Activated T-helper 1 cell treated with anti-CD3 and anti-CD28 coated beads, Interleukin-12 subunit alpha, Interleukin-12 subunit beta, Interleukin-2, Interleukin-4 antibody, amounts not matched to agents 30 ng/mL and 10 ng/mL and 1 ng/mL, durations not matched to agents 14 hours and 24 hours and 36 hours (primary cell): ENCODE measurements at regions of chr3 and their contacts with region 1.

Region 1: GRCh38 chr3:184298759-184299496 is at the start of gene PSMD2:
- DNase-seq: peak; percentile 95
- H3K4me3 Mint-ChIP-seq: peak within 1 kb of the TSS; percentile 92
- H3K27ac Mint-ChIP-seq: peak within 1 kb of the TSS; percentile 85
- H3K4me1 Mint-ChIP-seq: peaks cover 23% of the 10 kb centered on the region
- H3K27me3 Mint-ChIP-seq: peaks cover 4% of the 10 kb centered on the region
- total RNA-seq, gene PSMD2: 251 and 255 TPM in 2 replicates

Region 2: DNA sequence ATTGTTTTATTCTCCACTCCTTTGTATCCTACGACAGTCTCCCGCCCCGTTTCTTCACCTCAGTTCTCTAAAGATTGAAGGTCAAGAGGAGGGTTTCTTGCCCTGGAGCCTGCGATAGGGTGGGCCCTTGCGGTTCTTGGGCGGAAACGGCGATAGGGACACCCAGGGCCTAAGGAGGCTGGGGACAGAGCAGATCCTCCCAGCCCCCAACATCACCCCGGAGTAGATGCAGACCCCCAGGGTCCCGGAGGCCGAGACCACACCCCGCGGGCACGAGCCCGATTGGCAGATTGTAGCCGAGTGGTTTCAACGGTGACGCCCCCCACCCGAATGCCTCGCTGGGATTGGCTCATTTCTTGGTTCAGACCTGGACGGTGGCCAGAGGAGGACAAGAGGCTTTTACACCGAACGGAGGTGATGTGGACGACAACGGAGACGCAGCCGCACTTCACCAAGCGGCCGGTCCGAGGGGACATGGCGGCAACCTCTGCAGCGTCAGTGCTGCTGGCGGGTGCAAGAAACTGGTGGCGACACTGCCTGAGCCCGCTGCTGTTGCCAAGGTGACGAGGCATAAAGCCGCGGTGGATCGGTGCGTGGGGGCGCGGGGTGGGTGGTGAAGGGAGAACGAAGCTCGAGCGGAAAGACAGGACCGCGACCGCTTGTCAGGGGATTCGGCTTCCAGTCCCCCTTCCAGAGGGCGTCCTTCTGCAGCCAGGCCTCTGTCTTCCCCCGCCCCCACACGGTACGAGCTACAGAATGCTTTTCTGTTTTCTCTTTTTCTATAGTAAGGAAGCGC is 851.5 kb before region 1 on chr3:
- intact Hi-C with region 1: loop called (anchors 10 kb)
- DNase-seq: peak; percentile 75
- H3K4me3 Mint-ChIP-seq: peak overlapping the region; percentile 94
- H3K27ac Mint-ChIP-seq: peak overlapping the region; percentile 86
- H3K4me1 Mint-ChIP-seq: peaks cover 22% of the 10 kb centered on the region
- H3K27me3 Mint-ChIP-seq: peaks cover 8% of the 10 kb centered on the region

Region 3: DNA sequence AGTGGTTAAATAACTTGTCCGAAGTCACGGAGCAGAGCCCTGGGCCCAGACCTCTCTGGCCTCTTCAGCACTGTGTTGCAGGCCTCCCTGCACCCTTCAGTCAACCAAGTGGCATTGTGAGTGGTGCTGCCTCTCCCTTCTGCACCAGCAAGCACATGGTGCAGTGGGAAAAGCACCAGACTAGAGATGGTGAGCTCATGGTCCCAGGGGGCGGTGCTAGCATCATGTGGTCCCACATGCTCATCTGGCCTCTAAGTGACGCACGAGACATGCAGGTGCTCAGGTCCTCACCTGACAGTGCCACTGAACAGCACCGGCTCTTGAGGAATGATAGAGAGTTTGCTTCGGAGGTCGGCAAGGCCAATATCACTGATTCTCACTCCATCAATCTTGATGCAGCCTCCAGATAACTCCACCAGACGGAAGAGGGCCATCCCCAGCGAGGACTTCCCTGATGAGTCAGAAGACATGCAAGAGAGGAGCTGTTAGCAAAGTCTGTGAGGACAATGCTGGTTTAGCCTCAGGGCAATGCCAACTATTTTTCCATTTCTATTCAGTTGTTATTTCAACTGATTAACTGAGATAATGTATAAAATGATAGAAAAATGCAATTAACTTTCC is 361.2 kb before region 1 on chr3:
- intact Hi-C with region 1: no loop called
- DNase-seq: no peak
- H3K4me3 Mint-ChIP-seq: no peak overlapping the region
- H3K27ac Mint-ChIP-seq: no peak overlapping the region
- H3K4me1 Mint-ChIP-seq: no peaks in the 10 kb centered on the region
- H3K27me3 Mint-ChIP-seq: no peaks in the 10 kb centered on the region

Region 4: GRCh38 chr3:184174646-184175492 is 124.1 kb before region 1 on chr3 and contains the start of gene AP2M1:
- intact Hi-C with region 1: loop called (anchors 1 kb)
- DNase-seq: peak; percentile 99
- H3K4me3 Mint-ChIP-seq: peak within 1 kb of the TSS; percentile 95
- H3K27ac Mint-ChIP-seq: peak within 1 kb of the TSS; percentile 85
- H3K4me1 Mint-ChIP-seq: peaks cover 28% of the 10 kb centered on the region
- H3K27me3 Mint-ChIP-seq: no peaks in the 10 kb centered on the region
- total RNA-seq, gene AP2M1: 235 and 238 TPM in 2 replicates

Region 5: DNA sequence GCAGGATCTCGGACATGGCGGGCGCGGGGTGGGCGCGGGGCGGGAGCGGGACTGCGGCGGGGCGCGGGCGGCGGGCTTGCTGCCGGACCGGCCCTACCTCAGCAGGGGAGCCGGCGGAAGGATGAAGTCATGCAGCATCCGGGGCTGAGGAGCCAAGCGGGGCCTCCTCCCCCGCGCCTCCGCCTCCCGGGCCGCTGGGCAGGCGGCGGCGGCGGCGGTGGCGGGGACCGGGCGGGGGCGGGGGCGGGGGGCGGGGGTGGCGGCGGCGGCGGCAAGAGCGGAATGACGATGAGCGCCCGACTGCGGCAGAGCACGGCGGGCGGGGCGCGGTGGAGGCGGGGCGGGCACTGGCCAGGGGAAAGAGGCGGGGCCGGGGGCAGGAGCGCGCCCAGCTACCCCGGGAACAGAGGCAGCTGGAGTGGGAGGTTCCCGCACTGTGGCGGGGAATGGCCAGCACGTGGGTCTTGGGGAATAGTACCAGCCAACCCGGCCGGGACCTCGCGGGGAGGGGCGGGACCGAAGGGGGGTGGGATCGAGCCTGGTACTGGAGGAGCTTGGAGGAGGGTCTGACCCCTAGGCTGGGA is 37.6 kb before region 1 on chr3 and contains the start of gene CAMK2N2:
- intact Hi-C with region 1: loop called (anchors 1 kb)
- DNase-seq: peak; percentile 50
- H3K4me3 Mint-ChIP-seq: peak within 1 kb of the TSS; percentile 83
- H3K27ac Mint-ChIP-seq: peak within 1 kb of the TSS; percentile 78
- H3K4me1 Mint-ChIP-seq: peaks cover 17% of the 10 kb centered on the region
- H3K27me3 Mint-ChIP-seq: peaks cover 37% of the 10 kb centered on the region
- total RNA-seq, gene CAMK2N2: 0.15 and 0.52 TPM in 2 replicates

Region 6: GRCh38 chr3:184335661-184336546 is 37.0 kb after region 1 on chr3:
- intact Hi-C with region 1: loop called (anchors 1 kb)
- DNase-seq: peak; percentile 84
- H3K4me3 Mint-ChIP-seq: peak overlapping the region; percentile 87
- H3K27ac Mint-ChIP-seq: peak overlapping the region; percentile 92
- H3K4me1 Mint-ChIP-seq: peaks cover 58% of the 10 kb centered on the region
- H3K27me3 Mint-ChIP-seq: peaks cover 2% of the 10 kb centered on the region